ENCODE measurements at regions of chr7 and their contacts with region 1.

Region 1: DNA sequence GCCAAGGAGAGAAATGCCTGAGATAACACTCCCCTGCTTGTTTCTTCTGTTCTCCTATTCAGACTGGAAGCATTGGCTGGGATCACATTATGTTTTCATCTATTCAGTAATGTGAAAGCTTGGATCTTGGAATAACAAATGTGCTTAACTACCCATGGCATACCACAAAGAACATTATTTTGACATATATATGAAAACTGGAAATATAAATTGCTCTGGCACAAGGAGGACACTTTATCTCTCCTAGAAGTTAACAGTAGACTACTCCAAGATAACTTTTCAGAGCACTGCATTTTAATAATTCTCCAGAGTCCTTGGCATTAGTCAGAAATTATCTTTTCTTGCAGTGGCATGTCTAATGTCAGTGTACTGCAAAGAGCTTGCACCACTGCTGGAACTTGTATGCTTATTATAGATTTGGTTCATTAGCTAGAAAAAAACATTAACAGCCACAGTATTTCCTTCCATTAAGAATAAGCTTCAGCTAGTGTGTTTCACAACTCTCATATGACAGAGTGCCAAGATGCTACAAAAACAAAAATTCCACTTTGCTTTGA is 169.3 kb upstream of the LRRN3 start:
- DNase-seq: no peak
- ATAC-seq: no peak
- H3K4me3 ChIP-seq: no peak overlapping the region
- H3K4me3 Mint-ChIP-seq: no peak overlapping the region
- H3K27ac ChIP-seq: no peak overlapping the region
- H3K27ac Mint-ChIP-seq: no peak overlapping the region
- H3K4me1 ChIP-seq: no peaks in the 10 kb centered on the region
- H3K4me1 Mint-ChIP-seq: peaks cover 0 to 13% (median 0%) of the 10 kb centered on the region in 7 donors
- H3K27me3 ChIP-seq: no peaks in the 10 kb centered on the region
- H3K27me3 Mint-ChIP-seq: no peaks in the 10 kb centered on the region

Region 2: GRCh38 chr7:110623436-110623835 is 298.2 kb before region 1 on chr7:
- CTCF ChIA-PET with region 1: no interaction called
- POLR2A ChIA-PET with region 1: no interaction called
- intact Hi-C with region 1: no loop called
- DNase-seq: no peak
- ATAC-seq: no peak
- H3K4me3 ChIP-seq: no peak overlapping the region
- H3K4me3 Mint-ChIP-seq: no peak overlapping the region
- H3K27ac ChIP-seq: no peak overlapping the region
- H3K27ac Mint-ChIP-seq: no peak overlapping the region
- H3K4me1 ChIP-seq: no peaks in the 10 kb centered on the region
- H3K4me1 Mint-ChIP-seq: no peaks in the 10 kb centered on the region
- H3K27me3 ChIP-seq: no peaks in the 10 kb centered on the region
- H3K27me3 Mint-ChIP-seq: peaks cover 0 to 12% (median 0%) of the 10 kb centered on the region in 5 donors

Region 3: GRCh38 chr7:110877016-110877415 is 44.7 kb before region 1 on chr7:
- CTCF ChIA-PET with region 1: no interaction called
- POLR2A ChIA-PET with region 1: no interaction called
- intact Hi-C with region 1: no loop called
- DNase-seq: no peak
- ATAC-seq: no peak
- H3K4me3 ChIP-seq: no peak overlapping the region
- H3K4me3 Mint-ChIP-seq: no peak overlapping the region
- H3K27ac ChIP-seq: no peak overlapping the region
- H3K27ac Mint-ChIP-seq: peak overlapping the region in 1 of 9 donors; percentile 37
- H3K4me1 ChIP-seq: no peaks in the 10 kb centered on the region
- H3K4me1 Mint-ChIP-seq: peaks cover 0 to 16% (median under 1%) of the 10 kb centered on the region in 7 donors
- H3K27me3 ChIP-seq: no peaks in the 10 kb centered on the region
- H3K27me3 Mint-ChIP-seq: no peaks in the 10 kb centered on the region

Region 4: DNA sequence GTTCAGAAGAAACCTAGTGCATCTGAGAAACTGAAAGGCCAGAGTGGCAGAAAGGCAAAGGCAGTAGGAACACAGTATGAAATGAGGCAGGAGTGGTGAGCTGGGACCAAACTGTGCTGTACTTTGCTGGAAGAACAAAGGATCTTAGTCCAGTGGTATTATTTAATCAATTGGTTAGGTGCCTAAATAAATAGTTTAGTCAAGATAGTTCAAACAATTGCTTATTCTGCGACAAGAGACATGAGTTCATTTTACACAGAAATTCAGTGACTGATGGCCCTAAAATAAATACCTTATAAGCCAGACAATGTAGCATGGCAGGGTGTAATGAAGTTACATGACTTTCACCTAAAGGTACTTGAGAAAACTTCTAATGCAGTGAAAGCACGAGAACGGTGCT is 12.6 kb before region 1 on chr7:
- CTCF ChIA-PET with region 1: interaction called, 3 read pairs
- POLR2A ChIA-PET with region 1: no interaction called
- intact Hi-C with region 1: loop called in 1 of 2 experiments (anchors 2 kb)
- DNase-seq: no peak
- ATAC-seq: no peak
- H3K4me3 ChIP-seq: no peak overlapping the region
- H3K4me3 Mint-ChIP-seq: peak overlapping the region in 1 of 10 donors; percentile 1
- H3K27ac ChIP-seq: no peak overlapping the region
- H3K27ac Mint-ChIP-seq: no peak overlapping the region
- H3K4me1 ChIP-seq: peaks cover 0 to 8% of the 10 kb centered on the region in 2 donors
- H3K4me1 Mint-ChIP-seq: peaks cover 0 to 50% (median 35%) of the 10 kb centered on the region in 7 donors
- H3K27me3 ChIP-seq: no peaks in the 10 kb centered on the region
- H3K27me3 Mint-ChIP-seq: no peaks in the 10 kb centered on the region

Region 5: DNA sequence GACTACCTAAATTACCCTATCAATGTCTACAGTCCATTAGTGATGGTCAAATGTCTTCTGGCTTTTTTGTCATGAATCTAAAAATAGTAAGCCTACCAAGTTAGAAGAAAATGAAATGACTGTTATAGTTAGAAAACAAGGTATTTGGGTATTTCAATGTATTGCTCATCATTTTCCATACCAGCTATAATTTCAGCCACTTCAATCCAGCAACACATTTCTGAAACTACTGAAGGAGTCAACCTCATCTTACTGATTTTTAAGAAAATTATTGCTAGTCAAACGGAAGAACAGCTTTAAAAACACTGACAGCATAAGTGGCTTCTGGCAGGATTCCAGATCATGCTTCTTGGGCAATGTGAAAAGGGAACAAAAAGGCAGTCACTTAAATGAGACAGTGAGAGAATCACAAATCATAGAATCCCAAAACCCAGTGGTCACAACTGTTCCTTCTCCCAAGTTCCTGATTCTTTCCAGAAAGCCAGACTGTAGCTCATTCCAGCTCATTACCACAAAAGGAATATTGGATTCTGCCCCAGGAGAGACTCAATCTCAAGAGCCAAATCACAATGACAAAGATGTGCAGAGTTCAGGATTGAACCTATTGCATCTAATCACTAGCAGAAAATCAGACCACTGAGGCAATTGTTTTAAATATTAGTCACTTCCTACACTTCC is 108.0 kb after region 1 on chr7:
- CTCF ChIA-PET with region 1: no interaction called
- POLR2A ChIA-PET with region 1: no interaction called
- intact Hi-C with region 1: no loop called
- DNase-seq: peak in 7 of 9 donors; percentile 34 to 68 (median 57)
- ATAC-seq: no peak
- H3K4me3 ChIP-seq: no peak overlapping the region
- H3K4me3 Mint-ChIP-seq: peak overlapping the region in 9 of 10 donors; percentile 42 to 81 (median 63)
- H3K27ac ChIP-seq: peak overlapping the region; percentile 33
- H3K27ac Mint-ChIP-seq: peak overlapping the region; percentile 77 to 98 (median 89)
- H3K4me1 ChIP-seq: peaks cover 15 to 47% of the 10 kb centered on the region in 2 donors
- H3K4me1 Mint-ChIP-seq: peaks cover 31 to 69% (median 63%) of the 10 kb centered on the region in 7 donors
- H3K27me3 ChIP-seq: no peaks in the 10 kb centered on the region
- H3K27me3 Mint-ChIP-seq: peaks cover 0 to 2% (median 0%) of the 10 kb centered on the region in 5 donors

Region 6: GRCh38 chr7:111485701-111486380 is 564.2 kb after region 1 on chr7:
- CTCF ChIA-PET with region 1: no interaction called
- POLR2A ChIA-PET with region 1: no interaction called
- intact Hi-C with region 1: no loop called
- DNase-seq: no peak
- ATAC-seq: no peak
- H3K4me3 ChIP-seq: no peak overlapping the region
- H3K4me3 Mint-ChIP-seq: no peak overlapping the region
- H3K27ac ChIP-seq: no peak overlapping the region
- H3K27ac Mint-ChIP-seq: no peak overlapping the region
- H3K4me1 ChIP-seq: no peaks in the 10 kb centered on the region
- H3K4me1 Mint-ChIP-seq: peaks cover 0 to 2% (median 0%) of the 10 kb centered on the region in 7 donors
- H3K27me3 ChIP-seq: no peaks in the 10 kb centered on the region
- H3K27me3 Mint-ChIP-seq: no peaks in the 10 kb centered on the region

Measured in naive thymus-derived CD4-positive, alpha-beta T cell (primary cell).